Posterior vena cava (tissue), 2 donors: ENCODE measurements at regions of chr16 and their contacts with region 1.

Region 1: DNA sequence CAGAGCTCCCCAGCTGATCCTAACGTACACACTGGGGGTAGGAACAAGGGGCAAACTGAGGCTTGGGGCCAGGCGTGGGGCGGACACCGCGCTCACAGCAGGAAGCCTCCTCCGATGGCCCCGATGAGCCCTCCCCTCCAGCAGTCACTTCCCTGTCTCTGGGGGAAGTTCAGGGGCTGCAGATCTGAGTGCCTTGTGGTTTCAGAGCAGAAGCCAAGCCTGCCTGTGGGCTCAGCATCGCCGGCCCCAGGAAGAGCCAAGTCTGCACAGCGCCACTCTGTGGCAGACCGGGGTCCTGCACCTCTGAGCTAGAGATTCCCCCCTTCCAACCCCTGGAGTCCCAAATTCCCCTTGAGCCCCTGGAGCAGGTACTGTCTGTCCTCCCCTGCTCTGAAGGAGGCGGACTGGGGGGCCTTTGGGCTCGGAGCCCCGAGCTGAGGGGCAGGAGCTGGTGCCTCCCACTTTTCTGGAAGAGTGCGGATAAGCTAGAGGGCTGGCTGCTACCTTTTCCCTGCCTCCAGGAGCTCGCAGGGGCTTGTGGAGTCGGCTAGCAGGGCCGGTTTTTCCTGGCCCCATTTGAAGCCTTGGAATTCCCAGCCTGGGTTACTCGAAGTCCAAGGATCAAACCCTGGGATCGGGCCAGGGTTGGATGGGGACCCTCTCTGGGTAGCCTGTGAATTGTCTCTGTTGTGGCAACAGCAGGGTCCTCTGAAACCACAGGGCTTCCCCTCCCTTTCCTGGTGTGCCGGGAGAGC is 2.9 kb downstream of the GSE1 start:
- DNase-seq: peak; percentile 95

Region 2: DNA sequence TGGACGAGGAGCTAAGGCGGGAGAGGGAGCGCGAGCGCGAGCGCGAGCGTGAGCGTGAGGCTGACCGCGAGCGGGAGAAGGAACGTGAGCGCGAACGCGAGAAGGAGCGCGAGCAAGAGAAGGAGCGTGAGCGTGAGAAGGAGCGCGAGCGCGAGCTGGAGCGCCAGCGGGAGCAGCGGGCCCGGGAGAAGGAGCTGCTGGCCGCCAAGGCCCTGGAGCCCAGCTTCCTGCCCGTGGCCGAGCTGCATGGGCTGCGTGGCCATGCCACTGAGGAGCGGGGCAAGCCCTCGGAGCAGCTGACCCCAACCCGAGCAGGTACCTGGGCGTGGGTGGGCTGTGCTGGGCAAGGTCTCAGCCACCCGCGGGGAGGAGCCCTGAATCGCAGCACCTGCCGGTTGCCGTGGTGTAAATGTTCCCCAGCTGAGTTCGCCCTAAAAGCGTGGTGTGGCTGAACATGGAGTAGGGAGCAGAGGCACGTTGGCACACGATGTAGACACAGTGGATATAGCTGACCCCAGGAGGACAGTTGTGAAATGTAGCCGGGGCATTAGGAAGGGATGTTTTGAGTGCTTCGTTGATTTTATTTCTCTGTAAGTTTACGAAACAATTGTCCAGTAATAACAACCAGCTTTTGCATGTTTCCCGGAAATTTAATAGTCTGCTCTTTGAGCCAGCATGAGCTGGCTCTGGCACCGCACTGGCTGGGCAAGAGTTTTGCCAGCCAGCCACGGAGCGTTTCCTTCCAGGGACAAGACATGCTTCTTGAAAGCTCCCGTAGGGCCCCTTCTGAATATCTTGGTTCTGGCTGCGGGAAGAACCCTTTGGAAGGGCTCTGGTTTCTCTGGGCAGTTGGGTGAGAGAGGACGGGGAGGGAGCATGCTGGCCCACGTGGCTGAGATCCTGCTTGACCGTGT is 40.6 kb after region 1 on chr16:
- intact Hi-C with region 1: loop called in 1 of 2 experiments (anchors 1 kb)
- DNase-seq: no peak

Region 3: DNA sequence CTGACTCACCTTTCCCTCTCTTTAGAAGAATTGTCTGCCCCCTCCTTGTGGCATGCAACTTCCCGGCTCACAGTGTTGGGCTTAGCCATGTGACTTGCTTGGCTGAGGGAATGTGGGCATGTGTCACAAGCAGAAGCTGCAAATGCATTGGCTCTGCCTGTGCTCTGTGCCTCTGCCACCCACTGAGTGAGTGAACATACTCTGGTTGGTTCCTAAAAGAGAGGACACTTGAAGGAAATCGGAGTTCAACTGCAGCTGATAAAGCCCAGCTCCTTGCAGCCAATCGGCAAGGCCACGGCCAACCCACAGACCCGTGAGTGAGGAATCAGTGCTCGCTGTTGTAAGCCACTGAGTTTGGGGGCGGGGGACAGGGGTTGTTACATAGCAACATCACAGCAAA is 83.6 kb after region 1 on chr16:
- intact Hi-C with region 1: no loop called
- DNase-seq: no peak